ENCODE measurements at regions of chrX and their contacts with region 1.

Region 1: DNA sequence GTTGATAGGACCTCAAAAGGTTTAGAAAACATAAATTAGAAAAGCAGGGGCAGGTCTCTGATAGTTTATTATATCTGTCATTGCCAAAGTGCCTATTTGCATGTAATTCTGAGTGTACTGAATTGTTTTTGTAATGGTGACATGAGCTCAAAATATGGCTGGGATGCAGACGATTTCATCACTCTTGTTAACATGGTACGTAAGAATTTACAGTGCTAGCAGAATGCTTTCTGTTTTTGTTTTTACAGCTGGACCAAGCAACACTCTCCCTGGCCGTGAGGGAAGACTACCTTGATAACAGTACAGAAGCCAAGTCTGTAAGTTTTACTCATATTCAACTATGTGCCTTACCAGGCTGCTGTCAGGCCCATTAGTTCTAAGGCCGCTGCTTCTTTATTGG is 58.1 kb downstream of the PHEX start:
- DNase-seq: no peak
- H3K4me3 Mint-ChIP-seq: peak overlapping the region; percentile 66
- H3K27ac Mint-ChIP-seq: peak overlapping the region; percentile 66
- H3K4me1 Mint-ChIP-seq: peaks cover 22% of the 10 kb centered on the region
- H3K27me3 Mint-ChIP-seq: no peaks in the 10 kb centered on the region

Region 2: DNA sequence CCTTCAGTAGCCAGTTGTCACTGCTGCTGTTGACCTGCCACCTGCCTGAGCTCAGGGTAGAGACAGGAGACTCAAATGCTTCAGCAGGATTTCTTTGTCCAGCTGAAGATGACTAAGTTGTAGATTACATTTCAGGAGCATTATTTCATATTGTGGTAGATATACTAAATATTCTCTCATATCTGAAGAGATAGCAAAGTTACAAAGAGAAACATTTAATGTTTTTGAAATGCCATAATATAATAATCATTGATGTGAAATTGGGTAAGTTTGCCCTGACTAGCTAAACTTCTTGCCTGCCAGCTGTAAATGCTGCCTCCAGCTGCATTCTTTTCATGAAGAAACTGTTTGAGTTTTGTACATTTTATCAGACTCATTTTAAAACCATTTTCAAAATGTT is 963.5 kb before region 1 on chrX:
- CTCF ChIA-PET with region 1: no interaction called
- intact Hi-C with region 1: no loop called
- DNase-seq: no peak
- H3K4me3 Mint-ChIP-seq: no peak overlapping the region
- H3K27ac Mint-ChIP-seq: no peak overlapping the region
- H3K4me1 Mint-ChIP-seq: no peaks in the 10 kb centered on the region
- H3K27me3 Mint-ChIP-seq: no peaks in the 10 kb centered on the region

Region 3: GRCh38 chrX:21990832-21991231 is 99.3 kb before region 1 on chrX:
- CTCF ChIA-PET with region 1: interaction called, 5 read pairs
- intact Hi-C with region 1: loop called (anchors 2 kb)
- DNase-seq: no peak
- H3K4me3 Mint-ChIP-seq: no peak overlapping the region
- H3K27ac Mint-ChIP-seq: no peak overlapping the region
- H3K4me1 Mint-ChIP-seq: peaks cover 42% of the 10 kb centered on the region
- H3K27me3 Mint-ChIP-seq: no peaks in the 10 kb centered on the region